ENCODE measurements at regions of chr1 and their contacts with region 1.

Region 1: GRCh38 chr1:27044613-27045151 is 32.0 kb upstream of the TENT5B start:
- DNase-seq: peak; percentile 70
- H3K4me3 ChIP-seq: no peak overlapping the region
- H3K27ac ChIP-seq: no peak overlapping the region
- H3K4me1 ChIP-seq: peaks cover 4% of the 10 kb centered on the region
- H3K27me3 ChIP-seq: no peaks in the 10 kb centered on the region
- CTCF ChIP-seq: peak; percentile 98 to 99

Region 2: DNA sequence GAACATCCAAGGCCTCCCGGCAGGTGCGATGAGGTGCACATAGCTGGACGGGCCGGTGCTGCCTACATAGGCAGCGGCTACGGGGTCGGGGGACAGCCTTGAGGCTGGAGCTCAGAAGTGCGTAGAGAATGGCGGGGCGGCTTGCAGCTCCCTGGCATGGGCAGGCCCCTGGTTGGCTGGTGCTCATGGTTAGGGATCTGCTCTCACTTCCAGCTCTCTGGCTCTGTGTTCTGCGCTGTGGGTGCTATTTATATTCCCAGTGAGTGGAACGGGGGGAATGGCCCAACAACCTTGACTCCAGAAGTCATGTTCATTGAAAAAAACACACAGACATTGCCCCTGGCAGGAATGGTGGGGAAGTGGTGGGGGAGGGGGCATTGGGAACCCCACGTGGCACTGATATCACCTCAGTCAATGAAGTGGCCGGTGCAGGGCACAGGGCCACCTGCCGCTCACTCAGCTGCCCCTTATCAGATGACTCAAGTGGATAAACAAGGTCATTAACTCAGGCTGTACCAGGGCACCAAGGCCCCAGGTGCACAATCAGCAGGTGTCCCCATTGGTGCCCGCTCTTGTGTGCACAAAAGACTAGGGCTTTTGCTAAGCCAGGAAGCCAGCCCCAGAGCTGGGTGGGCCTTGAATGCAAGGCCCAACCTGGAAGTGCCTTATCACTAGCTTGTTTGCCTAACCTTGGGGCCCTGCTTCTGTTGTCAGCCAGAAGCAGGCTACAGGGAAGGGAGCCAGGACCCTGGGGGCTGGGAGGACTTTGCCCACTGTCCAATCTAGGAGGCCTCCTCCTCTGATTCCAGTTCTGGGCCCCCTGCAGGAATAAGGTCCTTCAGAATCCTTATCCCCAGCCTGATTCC is 130.7 kb before region 1 on chr1 and contains the start of gene NR0B2:
- CTCF ChIA-PET with region 1: interaction called, 11 read pairs
- dilution Hi-C with region 1: no loop called
- in situ Hi-C with region 1: no loop called
- intact Hi-C with region 1: no loop called
- DNase-seq: no peak
- H3K4me3 ChIP-seq: no peak within 1 kb of the TSS
- H3K27ac ChIP-seq: no peak within 1 kb of the TSS
- H3K4me1 ChIP-seq: no peaks in the 10 kb centered on the region
- H3K27me3 ChIP-seq: no peaks in the 10 kb centered on the region
- CTCF ChIP-seq: no peak
- total RNA-seq, gene NR0B2: not detected

Region 3: DNA sequence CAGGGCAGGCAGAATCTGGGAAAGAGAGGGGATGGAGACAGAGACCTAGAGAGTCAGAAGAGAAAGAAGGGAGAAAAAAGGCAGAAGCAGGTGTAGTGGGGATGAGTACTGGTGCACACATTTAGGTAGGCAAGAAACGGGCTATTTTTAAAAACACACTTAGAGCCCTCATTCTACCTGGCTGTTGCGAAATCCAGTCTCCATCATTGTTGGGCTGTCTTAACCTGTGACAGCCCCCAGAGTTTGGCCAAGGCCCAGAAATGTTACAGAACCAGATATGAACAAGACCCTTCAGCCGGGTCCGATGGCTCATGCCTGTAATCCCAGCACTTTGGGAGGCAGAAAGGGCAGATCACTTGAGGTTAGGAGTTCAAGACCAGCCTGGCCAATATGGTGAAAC is 71.9 kb before region 1 on chr1:
- CTCF ChIA-PET with region 1: no interaction called
- dilution Hi-C with region 1: no loop called
- in situ Hi-C with region 1: no loop called
- intact Hi-C with region 1: no loop called
- DNase-seq: no peak
- H3K4me3 ChIP-seq: no peak overlapping the region
- H3K27ac ChIP-seq: no peak overlapping the region
- H3K4me1 ChIP-seq: no peaks in the 10 kb centered on the region
- H3K27me3 ChIP-seq: no peaks in the 10 kb centered on the region
- CTCF ChIP-seq: no peak

Region 4: DNA sequence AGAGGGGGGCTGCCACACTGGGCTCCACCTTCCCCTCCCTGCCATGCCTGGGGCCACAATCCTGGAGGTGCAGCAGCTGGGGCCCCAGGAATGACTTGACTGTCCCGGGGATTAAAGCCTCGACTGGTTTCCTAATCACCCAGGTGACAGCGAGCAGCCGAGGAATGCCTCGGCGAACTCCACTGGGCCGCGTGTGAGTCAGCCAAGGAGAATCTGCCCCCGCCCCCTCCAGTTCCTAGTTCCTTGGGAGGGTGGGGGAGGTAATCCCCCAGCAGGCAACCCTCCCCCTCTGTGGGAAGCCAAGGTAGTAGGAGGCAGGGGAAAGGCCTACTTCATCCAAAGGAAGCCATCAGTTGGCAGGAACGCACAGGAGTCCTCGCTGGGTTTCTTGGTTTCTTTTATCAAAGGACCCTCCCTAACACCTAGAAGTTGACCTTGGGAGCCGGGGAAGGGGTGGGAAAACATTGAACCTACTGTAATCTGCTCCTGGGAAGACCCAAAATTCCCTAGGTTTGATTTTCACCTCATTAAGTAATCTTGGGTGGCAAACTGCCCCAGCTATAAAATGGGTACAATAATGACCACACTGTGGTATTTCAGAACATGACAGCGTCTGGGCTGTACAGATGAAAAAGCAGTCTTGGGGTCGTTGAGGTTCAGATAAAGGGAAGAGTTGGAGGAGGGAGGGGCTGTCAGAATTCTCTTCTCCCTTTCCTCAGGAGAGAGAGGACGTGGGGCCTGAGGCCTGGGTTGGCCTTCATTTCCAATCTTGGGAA is 33.5 kb before region 1 on chr1:
- CTCF ChIA-PET with region 1: interaction called, 6 read pairs
- dilution Hi-C with region 1: no loop called
- in situ Hi-C with region 1: no loop called
- intact Hi-C with region 1: loop called (anchors 1 kb)
- DNase-seq: peak; percentile 91
- H3K4me3 ChIP-seq: peak overlapping the region; percentile 40 to 82 (median 61)
- H3K27ac ChIP-seq: peak overlapping the region; percentile 88
- H3K4me1 ChIP-seq: peaks cover 57% of the 10 kb centered on the region
- H3K27me3 ChIP-seq: no peaks in the 10 kb centered on the region
- CTCF ChIP-seq: no peak

Region 5: GRCh38 chr1:27077968-27078367 is 33.3 kb after region 1 on chr1:
- CTCF ChIA-PET with region 1: no interaction called
- dilution Hi-C with region 1: no loop called
- in situ Hi-C with region 1: no loop called
- intact Hi-C with region 1: no loop called
- DNase-seq: no peak
- H3K4me3 ChIP-seq: no peak overlapping the region
- H3K27ac ChIP-seq: no peak overlapping the region
- H3K4me1 ChIP-seq: no peaks in the 10 kb centered on the region
- H3K27me3 ChIP-seq: no peaks in the 10 kb centered on the region
- CTCF ChIP-seq: no peak

Region 6: GRCh38 chr1:27097484-27097917 is 52.8 kb after region 1 on chr1:
- CTCF ChIA-PET with region 1: interaction called, 11 read pairs
- dilution Hi-C with region 1: no loop called
- in situ Hi-C with region 1: loop called (anchors 5 kb)
- intact Hi-C with region 1: loop called (anchors 1 kb)
- DNase-seq: peak; percentile 70
- H3K4me3 ChIP-seq: no peak overlapping the region
- H3K27ac ChIP-seq: no peak overlapping the region
- H3K4me1 ChIP-seq: peaks cover 34% of the 10 kb centered on the region
- H3K27me3 ChIP-seq: no peaks in the 10 kb centered on the region
- CTCF ChIP-seq: peak; percentile 95

Region 7: GRCh38 chr1:27284425-27285273 is 240.0 kb after region 1 on chr1:
- CTCF ChIA-PET with region 1: no interaction called
- dilution Hi-C with region 1: loop called (anchors 25 kb)
- in situ Hi-C with region 1: no loop called
- intact Hi-C with region 1: loop called (anchors 1 kb)
- DNase-seq: peak; percentile 55
- H3K4me3 ChIP-seq: no peak overlapping the region
- H3K27ac ChIP-seq: no peak overlapping the region
- H3K4me1 ChIP-seq: no peaks in the 10 kb centered on the region
- H3K27me3 ChIP-seq: no peaks in the 10 kb centered on the region
- CTCF ChIP-seq: peak; percentile 74 to 92

Region 8: GRCh38 chr1:27392096-27392777 is 347.6 kb after region 1 on chr1 and contains the start of gene GPR3:
- CTCF ChIA-PET with region 1: interaction called, 3 read pairs
- dilution Hi-C with region 1: no loop called
- in situ Hi-C with region 1: no loop called
- intact Hi-C with region 1: loop called (anchors 1 kb)
- DNase-seq: peak; percentile 84
- H3K4me3 ChIP-seq: peak within 1 kb of the TSS; percentile 54 to 73 (median 64)
- H3K27ac ChIP-seq: peak within 1 kb of the TSS; percentile 86
- H3K4me1 ChIP-seq: peaks cover 26% of the 10 kb centered on the region
- H3K27me3 ChIP-seq: no peaks in the 10 kb centered on the region
- CTCF ChIP-seq: peak in 1 of 2 donors; percentile 54
- total RNA-seq, gene GPR3: 0.50 to 2.3 TPM

Region 9: GRCh38 chr1:27662707-27663393 is 618.2 kb after region 1 on chr1:
- CTCF ChIA-PET with region 1: interaction called, 15 read pairs
- dilution Hi-C with region 1: no loop called
- in situ Hi-C with region 1: no loop called
- intact Hi-C with region 1: no loop called
- DNase-seq: peak; percentile 62
- H3K4me3 ChIP-seq: no peak overlapping the region
- H3K27ac ChIP-seq: no peak overlapping the region
- H3K4me1 ChIP-seq: peaks cover 14% of the 10 kb centered on the region
- H3K27me3 ChIP-seq: no peaks in the 10 kb centered on the region
- CTCF ChIP-seq: peak; percentile 81

Measured in mammary epithelial cell (primary cell).